ENCODE measurements at regions of chr1 and their contacts with region 1.

Region 1: GRCh38 chr1:43171876-43172526 is at the starts of genes CFAP57 and EBNA1BP2:
- DNase-seq: peak; percentile 83 to 97 (median 88)
- ATAC-seq: peak; percentile 75
- H3K4me3 ChIP-seq: peak within 1 kb of the TSS; percentile 93
- H3K4me3 Mint-ChIP-seq: peak within 1 kb of the TSS; percentile 96
- H3K27ac ChIP-seq: peak within 1 kb of the TSS; percentile 25 to 69
- H3K27ac Mint-ChIP-seq: peak within 1 kb of the TSS; percentile 82
- H3K4me1 ChIP-seq: peaks cover 14% of the 10 kb centered on the region
- H3K4me1 Mint-ChIP-seq: peaks cover 33% of the 10 kb centered on the region
- H3K27me3 ChIP-seq: peaks cover 9 to 14% of the 10 kb centered on the region in 2 experiments
- H3K27me3 Mint-ChIP-seq: peaks cover 16% of the 10 kb centered on the region
- CTCF ChIP-seq: no peak
- total RNA-seq, gene CFAP57: not detected
- total RNA-seq, gene EBNA1BP2: 14.8 to 15.1 TPM

Region 2: DNA sequence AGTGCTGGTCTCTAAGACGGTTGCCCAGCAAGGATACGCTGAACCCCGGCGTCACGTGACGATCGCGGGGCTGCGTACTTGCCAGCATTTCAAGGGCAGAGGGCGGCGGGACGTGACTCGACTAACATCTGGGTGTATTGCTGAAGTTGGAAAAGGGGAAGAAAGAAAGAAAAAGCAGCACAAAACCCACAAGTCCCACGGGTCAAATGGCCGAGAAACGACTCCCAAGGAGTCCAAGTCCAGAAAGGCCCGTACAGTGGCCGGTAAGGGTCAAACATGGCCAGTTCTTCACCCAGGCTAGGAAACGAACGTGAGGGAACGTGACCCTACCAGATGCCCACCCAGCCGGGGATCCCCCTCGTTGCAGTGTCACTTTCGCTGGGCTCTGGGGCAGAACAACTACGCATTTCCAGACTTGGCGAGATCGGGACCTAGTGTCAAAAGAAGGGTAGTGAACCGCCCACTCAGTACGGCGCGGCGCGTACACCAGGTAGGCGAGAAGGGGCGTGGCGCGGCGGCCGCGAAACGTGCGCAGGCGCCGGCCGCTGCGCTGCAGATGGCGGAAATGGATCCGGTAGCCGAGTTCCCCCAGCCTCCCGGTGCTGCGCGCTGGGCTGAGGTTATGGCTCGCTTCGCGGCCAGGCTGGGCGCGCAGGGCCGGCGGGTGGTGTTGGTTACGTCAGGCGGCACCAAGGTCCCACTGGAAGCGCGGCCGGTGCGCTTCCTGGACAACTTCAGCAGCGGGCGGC is 715.8 kb before region 1 on chr1 and contains the starts of genes PPCS and ZMYND12:
- CTCF ChIA-PET with region 1: no interaction called
- POLR2A ChIA-PET with region 1: no interaction called
- intact Hi-C with region 1: loop called in 1 of 2 experiments (anchors 5 kb)
- DNase-seq: peak; percentile 84 to 97 (median 89)
- ATAC-seq: peak; percentile 90
- H3K4me3 ChIP-seq: peak within 1 kb of the TSS; percentile 70
- H3K4me3 Mint-ChIP-seq: peak within 1 kb of the TSS; percentile 95
- H3K27ac ChIP-seq: peak within 1 kb of the TSS; percentile 98 to 99
- H3K27ac Mint-ChIP-seq: peak within 1 kb of the TSS; percentile 96
- H3K4me1 ChIP-seq: peaks cover 24% of the 10 kb centered on the region
- H3K4me1 Mint-ChIP-seq: peaks cover 56% of the 10 kb centered on the region
- H3K27me3 ChIP-seq: no peaks in the 10 kb centered on the region
- H3K27me3 Mint-ChIP-seq: no peaks in the 10 kb centered on the region
- CTCF ChIP-seq: peak; percentile 28
- total RNA-seq, gene PPCS: 39.7 to 40.4 TPM
- total RNA-seq, gene ZMYND12: 0.58 to 0.70 TPM

Region 3: GRCh38 chr1:42846257-42847110 is 325.5 kb before region 1 on chr1 and contains the start of gene ZNF691:
- CTCF ChIA-PET with region 1: no interaction called
- POLR2A ChIA-PET with region 1: no interaction called
- intact Hi-C with region 1: loop called in 1 of 2 experiments (anchors 5 kb)
- DNase-seq: peak; percentile 73 to 96 (median 82)
- ATAC-seq: peak; percentile 98
- H3K4me3 ChIP-seq: peak within 1 kb of the TSS; percentile 96
- H3K4me3 Mint-ChIP-seq: peak within 1 kb of the TSS; percentile 94
- H3K27ac ChIP-seq: peak within 1 kb of the TSS in 1 of 2 donors; percentile 56
- H3K27ac Mint-ChIP-seq: peak within 1 kb of the TSS; percentile 67
- H3K4me1 ChIP-seq: peaks cover 19% of the 10 kb centered on the region
- H3K4me1 Mint-ChIP-seq: peaks cover 38% of the 10 kb centered on the region
- H3K27me3 ChIP-seq: no peaks in the 10 kb centered on the region
- H3K27me3 Mint-ChIP-seq: no peaks in the 10 kb centered on the region
- CTCF ChIP-seq: peak; percentile 47
- total RNA-seq, gene ZNF691: 1.2 to 1.7 TPM

Region 4: DNA sequence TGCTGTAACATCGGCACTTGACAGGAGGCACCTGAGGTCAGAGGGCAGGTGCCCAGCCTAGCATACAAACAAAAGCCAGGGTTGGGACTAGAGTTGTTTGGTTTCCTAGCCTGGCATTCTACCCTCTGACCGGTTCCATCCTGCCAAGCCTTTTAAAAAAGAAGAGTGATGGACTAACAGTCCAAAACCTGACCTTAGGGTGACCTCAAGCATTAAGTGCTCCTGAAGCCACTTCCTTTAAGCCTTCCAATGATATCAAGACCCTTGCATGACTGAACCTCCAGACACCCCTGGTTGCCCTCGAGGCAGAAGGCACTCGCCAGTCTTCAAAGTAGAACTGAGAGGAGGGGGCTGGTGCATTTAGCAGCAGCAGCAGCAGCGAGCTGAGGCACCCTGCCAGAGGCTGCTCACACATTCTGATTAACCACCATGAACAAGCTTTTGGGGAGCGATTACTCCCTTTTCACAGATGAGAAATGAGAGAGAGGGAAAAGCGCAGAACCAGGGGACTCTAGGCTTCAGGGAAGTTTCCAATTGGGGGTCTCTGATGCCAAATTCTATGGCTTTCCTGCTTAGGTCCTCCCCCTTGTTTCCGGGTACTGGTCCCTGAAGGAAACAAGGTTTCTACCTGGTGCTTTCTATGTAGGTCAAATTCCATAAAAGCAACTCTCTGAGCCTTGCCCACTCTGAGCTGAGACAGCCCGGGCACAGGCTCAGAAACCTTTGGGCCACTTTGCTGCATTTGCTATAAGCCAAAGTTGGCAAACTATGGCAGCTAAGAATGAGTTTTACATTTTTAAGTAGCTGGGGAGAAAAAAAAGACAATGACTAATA is 222.5 kb before region 1 on chr1:
- CTCF ChIA-PET with region 1: no interaction called
- POLR2A ChIA-PET with region 1: no interaction called
- intact Hi-C with region 1: no loop called
- DNase-seq: no peak
- ATAC-seq: no peak
- H3K4me3 ChIP-seq: no peak overlapping the region
- H3K4me3 Mint-ChIP-seq: peak overlapping the region; percentile 53
- H3K27ac ChIP-seq: no peak overlapping the region
- H3K27ac Mint-ChIP-seq: peak overlapping the region; percentile 69
- H3K4me1 ChIP-seq: peaks cover 94% of the 10 kb centered on the region
- H3K4me1 Mint-ChIP-seq: peaks cover 97% of the 10 kb centered on the region
- H3K27me3 ChIP-seq: no peaks in the 10 kb centered on the region
- H3K27me3 Mint-ChIP-seq: no peaks in the 10 kb centered on the region
- CTCF ChIP-seq: no peak

Region 5: DNA sequence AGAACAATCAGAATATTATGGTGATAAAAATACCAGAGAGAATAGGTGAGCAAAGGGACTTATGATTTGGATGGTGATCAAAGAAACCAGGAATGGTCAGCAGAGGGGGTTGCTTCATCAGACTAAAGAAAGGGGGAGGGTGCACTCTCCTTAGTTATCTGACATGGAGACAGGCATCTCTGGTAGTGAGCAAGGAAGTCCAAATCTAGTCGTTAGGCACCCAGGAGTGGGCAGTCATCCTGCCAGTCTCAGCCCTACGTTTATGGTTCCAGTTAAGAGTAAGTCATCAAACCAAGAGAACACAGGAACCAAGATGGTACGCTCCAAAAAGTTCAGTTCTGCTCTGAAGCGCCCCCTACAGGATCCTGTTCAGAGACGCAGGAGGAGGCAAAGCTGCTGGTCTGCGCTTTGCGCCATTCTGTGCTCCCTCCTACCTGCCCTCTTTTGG is 28.5 kb before region 1 on chr1:
- CTCF ChIA-PET with region 1: no interaction called
- POLR2A ChIA-PET with region 1: no interaction called
- intact Hi-C with region 1: no loop called
- DNase-seq: no peak
- ATAC-seq: no peak
- H3K4me3 ChIP-seq: no peak overlapping the region
- H3K4me3 Mint-ChIP-seq: no peak overlapping the region
- H3K27ac ChIP-seq: no peak overlapping the region
- H3K27ac Mint-ChIP-seq: no peak overlapping the region
- H3K4me1 ChIP-seq: peaks cover 8% of the 10 kb centered on the region
- H3K4me1 Mint-ChIP-seq: peaks cover 2% of the 10 kb centered on the region
- H3K27me3 ChIP-seq: peaks cover 35 to 52% of the 10 kb centered on the region in 2 experiments
- H3K27me3 Mint-ChIP-seq: peaks cover 71% of the 10 kb centered on the region
- CTCF ChIP-seq: no peak

Region 6: DNA sequence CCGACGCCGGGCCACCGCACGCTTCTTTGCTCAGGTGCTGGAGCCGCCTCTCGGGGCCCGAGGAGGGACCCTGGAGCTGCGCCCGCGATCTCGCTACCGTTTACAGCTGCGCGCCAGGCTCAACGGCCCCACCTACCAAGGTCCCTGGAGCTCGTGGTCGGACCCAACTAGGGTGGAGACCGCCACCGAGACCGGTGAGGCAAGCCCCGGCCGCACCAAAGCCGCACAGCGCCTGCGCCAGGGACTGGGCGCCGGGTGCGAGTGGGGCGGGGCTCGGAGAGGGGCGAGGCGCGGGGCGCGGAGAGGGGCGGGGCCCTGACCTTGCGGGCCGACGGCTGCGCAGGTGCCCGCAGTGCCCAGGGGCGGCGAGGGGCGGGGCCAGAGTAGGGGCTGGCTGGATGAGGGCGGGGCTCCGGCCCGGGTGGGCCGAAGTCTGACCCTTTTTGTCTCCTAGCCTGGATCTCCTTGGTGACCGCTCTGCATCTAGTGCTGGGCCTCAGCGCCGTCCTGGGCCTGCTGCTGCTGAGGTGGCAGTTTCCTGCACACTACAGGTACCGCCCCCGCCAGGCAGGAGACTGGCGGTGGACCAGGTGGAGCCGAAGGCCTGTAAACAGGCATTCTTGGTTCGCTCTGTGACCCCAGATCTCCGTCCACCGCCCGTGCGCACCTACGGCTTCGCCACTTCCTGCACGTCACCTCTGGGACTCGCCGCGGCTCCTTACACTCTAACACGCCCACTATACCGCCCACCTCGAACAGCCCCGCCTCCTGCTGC is 177.0 kb after region 1 on chr1:
- CTCF ChIA-PET with region 1: no interaction called
- POLR2A ChIA-PET with region 1: no interaction called
- intact Hi-C with region 1: no loop called
- DNase-seq: peak; percentile 35 to 89 (median 49)
- ATAC-seq: peak; percentile 85
- H3K4me3 ChIP-seq: peak overlapping the region; percentile 48
- H3K4me3 Mint-ChIP-seq: peak overlapping the region; percentile 68
- H3K27ac ChIP-seq: peak overlapping the region; percentile 55 to 72
- H3K27ac Mint-ChIP-seq: peak overlapping the region; percentile 89
- H3K4me1 ChIP-seq: peaks cover 8% of the 10 kb centered on the region
- H3K4me1 Mint-ChIP-seq: peaks cover 22% of the 10 kb centered on the region
- H3K27me3 ChIP-seq: no peaks in the 10 kb centered on the region
- H3K27me3 Mint-ChIP-seq: no peaks in the 10 kb centered on the region
- CTCF ChIP-seq: no peak

Region 7: DNA sequence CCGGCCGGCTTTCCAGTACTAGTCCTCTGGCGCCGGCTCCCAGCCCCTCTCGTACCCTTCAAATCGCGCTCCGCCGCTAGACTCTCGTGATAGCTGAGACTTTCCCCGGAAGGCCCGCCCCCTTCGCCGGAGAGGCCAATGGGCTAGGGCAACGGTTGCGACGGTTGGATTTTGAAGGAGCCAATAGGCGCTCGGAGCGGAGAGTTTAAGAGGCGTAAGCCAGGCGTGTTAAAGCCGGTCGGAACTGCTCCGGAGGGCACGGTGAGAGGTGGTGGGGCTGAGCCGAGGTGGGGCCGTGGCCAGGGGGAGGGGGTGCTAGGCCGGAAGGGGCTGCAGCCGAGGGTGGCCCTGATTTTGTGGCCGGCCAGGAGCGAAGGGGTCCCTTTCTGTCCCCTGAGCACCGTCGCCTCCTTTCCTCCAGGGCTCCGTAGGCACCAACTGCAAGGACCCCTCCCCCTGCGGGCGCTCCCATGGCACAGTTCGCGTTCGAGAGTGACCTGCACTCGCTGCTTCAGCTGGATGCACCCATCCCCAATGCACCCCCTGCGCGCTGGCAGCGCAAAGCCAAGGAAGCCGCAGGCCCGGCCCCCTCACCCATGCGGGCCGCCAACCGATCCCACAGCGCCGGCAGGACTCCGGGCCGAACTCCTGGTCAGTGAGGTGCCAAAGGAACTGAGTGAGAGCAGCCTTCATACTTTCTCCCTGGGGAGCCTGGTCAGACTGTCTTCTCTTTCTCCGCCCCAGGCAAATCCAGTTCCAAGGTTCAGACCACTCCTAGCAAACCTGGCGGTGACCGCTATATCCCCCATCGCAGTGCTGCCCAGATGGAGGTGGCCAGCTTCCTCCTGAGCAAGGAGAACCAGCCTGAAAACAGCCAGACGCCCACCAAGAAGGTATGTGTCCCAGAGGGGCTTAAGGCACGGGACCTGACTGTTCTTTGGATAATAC is 187.0 kb after region 1 on chr1 and contains the start of gene CDC20:
- CTCF ChIA-PET with region 1: no interaction called
- POLR2A ChIA-PET with region 1: no interaction called
- intact Hi-C with region 1: loop called in 1 of 2 experiments (anchors 5 kb)
- DNase-seq: peak; percentile 91 to 98 (median 96)
- ATAC-seq: peak; percentile 99
- H3K4me3 ChIP-seq: peak within 1 kb of the TSS; percentile 76
- H3K4me3 Mint-ChIP-seq: peak within 1 kb of the TSS; percentile 85
- H3K27ac ChIP-seq: peak within 1 kb of the TSS in 1 of 2 donors; percentile 37
- H3K27ac Mint-ChIP-seq: peak within 1 kb of the TSS; percentile 87
- H3K4me1 ChIP-seq: peaks cover 15% of the 10 kb centered on the region
- H3K4me1 Mint-ChIP-seq: peaks cover 19% of the 10 kb centered on the region
- H3K27me3 ChIP-seq: no peaks in the 10 kb centered on the region
- H3K27me3 Mint-ChIP-seq: no peaks in the 10 kb centered on the region
- CTCF ChIP-seq: no peak
- total RNA-seq, gene CDC20: 1.1 to 1.8 TPM

Region 8: GRCh38 chr1:44213222-44214112 is 1041.5 kb after region 1 on chr1 and contains the start of gene DMAP1:
- CTCF ChIA-PET with region 1: no interaction called
- POLR2A ChIA-PET with region 1: no interaction called
- intact Hi-C with region 1: loop called in 1 of 2 experiments (anchors 5 kb)
- DNase-seq: peak; percentile 77 to 92 (median 82)
- ATAC-seq: peak; percentile 89
- H3K4me3 ChIP-seq: peak within 1 kb of the TSS; percentile 92
- H3K4me3 Mint-ChIP-seq: peak within 1 kb of the TSS; percentile 98
- H3K27ac ChIP-seq: peak within 1 kb of the TSS; percentile 64 to 75
- H3K27ac Mint-ChIP-seq: peak within 1 kb of the TSS; percentile 93
- H3K4me1 ChIP-seq: peaks cover 29% of the 10 kb centered on the region
- H3K4me1 Mint-ChIP-seq: peaks cover 47% of the 10 kb centered on the region
- H3K27me3 ChIP-seq: no peaks in the 10 kb centered on the region
- H3K27me3 Mint-ChIP-seq: no peaks in the 10 kb centered on the region
- CTCF ChIP-seq: no peak
- total RNA-seq, gene DMAP1: 53.4 to 56.9 TPM

Measured in CD4-positive, alpha-beta T cell (primary cell).